ENCODE measurements at regions of chr3 and their contacts with region 1.

Region 1: DNA sequence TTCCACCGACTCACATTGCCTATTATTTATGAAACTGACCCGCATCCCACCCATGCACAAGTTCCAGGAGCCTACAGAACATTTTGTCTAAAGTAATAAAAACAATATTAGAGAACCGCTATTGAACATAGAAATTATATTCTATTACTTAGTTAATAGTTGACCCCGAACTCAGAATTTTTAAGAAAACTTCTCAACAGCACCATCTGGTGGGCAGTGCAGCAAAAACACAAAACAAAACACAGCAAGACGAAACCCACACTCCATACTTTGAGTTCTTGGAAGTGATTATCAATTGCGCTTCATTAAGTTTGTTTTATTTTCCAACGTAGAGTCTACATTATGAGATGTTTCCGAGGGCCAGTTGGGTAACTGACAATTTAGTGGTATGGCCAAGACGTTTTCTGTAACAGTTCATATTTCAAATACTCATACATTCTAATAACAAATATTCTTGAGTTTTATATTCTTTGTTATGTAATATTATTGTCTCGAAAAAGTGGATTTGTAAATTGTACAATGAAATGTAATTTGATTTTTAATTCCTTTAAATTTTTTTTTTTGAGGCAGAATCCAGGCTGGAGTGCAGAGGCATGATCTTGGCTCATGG is 24.0 kb upstream of the C3orf70 start:
- DNase-seq: peak; percentile 48
- H3K4me3 ChIP-seq: no peak overlapping the region
- H3K27ac ChIP-seq: no peak overlapping the region
- H3K4me1 ChIP-seq: peaks cover 10% of the 10 kb centered on the region
- H3K27me3 ChIP-seq: no peaks in the 10 kb centered on the region
- CTCF ChIP-seq: peak; percentile 69 to 79 (median 73)
- POLR2A ChIP-seq: no peak

Region 2: GRCh38 chr3:184874709-184875644 is 301.9 kb before region 1 on chr3:
- intact Hi-C with region 1: loop called (anchors 5 kb)
- DNase-seq: no peak
- H3K4me3 ChIP-seq: no peak overlapping the region
- H3K27ac ChIP-seq: no peak overlapping the region
- H3K4me1 ChIP-seq: no peaks in the 10 kb centered on the region
- H3K27me3 ChIP-seq: no peaks in the 10 kb centered on the region
- CTCF ChIP-seq: peak; percentile 38 to 66 (median 54)
- POLR2A ChIP-seq: no peak

Region 3: GRCh38 chr3:185065059-185065458 is 111.8 kb before region 1 on chr3:
- intact Hi-C with region 1: no loop called
- DNase-seq: no peak
- H3K4me3 ChIP-seq: no peak overlapping the region
- H3K27ac ChIP-seq: no peak overlapping the region
- H3K4me1 ChIP-seq: no peaks in the 10 kb centered on the region
- H3K27me3 ChIP-seq: no peaks in the 10 kb centered on the region
- CTCF ChIP-seq: no peak
- POLR2A ChIP-seq: no peak